ENCODE measurements at regions of chr1 and their contacts with region 1.

Region 1: GRCh38 chr1:109605381-109605780 is 14.0 kb downstream of the GNAT2 start:
- DNase-seq: no peak
- ATAC-seq: no peak
- H3K4me3 ChIP-seq: no peak overlapping the region
- H3K4me3 Mint-ChIP-seq: no peak overlapping the region
- H3K27ac ChIP-seq: no peak overlapping the region
- H3K27ac Mint-ChIP-seq: no peak overlapping the region
- H3K4me1 ChIP-seq: peaks cover 0 to 7% of the 10 kb centered on the region in 2 experiments
- H3K4me1 Mint-ChIP-seq: peaks cover 18 to 22% (median 21%) of the 10 kb centered on the region in 3 donors
- H3K27me3 ChIP-seq: no peaks in the 10 kb centered on the region
- H3K27me3 Mint-ChIP-seq: no peaks in the 10 kb centered on the region

Region 2: DNA sequence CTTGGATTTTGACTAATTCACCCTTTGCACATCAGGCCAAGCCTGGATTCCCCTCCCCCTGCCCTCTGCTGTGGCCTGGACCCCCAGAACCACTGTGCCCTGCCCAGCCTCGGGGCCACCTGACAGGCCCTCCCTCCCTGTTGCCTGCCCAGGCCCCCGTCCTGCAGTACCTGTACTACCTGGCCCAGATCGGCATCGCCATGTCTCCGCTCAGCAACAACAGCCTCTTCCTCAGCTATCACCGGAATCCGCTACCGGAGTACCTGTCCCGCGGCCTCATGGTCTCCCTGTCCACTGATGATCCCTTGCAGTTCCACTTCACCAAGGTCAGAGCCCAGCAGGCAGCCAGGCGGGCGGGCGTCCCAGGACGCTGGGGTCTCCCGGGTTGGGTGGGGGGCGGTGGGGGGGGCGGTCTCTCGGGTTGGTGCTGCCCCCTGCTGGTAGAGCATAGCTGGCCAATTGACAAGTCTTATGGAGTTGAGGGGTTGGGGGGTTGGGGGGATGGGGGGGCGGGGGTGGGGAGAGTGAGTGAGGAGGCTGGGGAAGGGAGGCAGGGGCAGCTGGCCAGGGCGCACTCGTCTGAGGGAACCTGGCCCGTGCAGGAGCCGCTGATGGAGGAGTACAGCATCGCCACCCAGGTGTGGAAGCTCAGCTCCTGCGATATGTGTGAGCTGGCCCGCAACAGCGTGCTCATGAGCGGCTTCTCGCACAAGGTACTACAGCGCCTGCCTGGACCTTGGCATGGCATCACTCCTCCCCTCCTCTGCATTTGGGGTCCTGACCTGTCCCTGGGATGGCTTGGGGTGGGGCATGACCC is 24.9 kb after region 1 on chr1:
- CTCF ChIA-PET with region 1: interaction called in 1 of 2 experiments, 10 read pairs
- POLR2A ChIA-PET with region 1: no interaction called
- DNase-seq: peak in 16 of 35 experiments; percentile 28 to 66 (median 36)
- ATAC-seq: peak in 3 of 4 experiments; percentile 9 to 51 (median 16)
- H3K4me3 ChIP-seq: no peak overlapping the region
- H3K4me3 Mint-ChIP-seq: no peak overlapping the region
- H3K27ac ChIP-seq: no peak overlapping the region
- H3K27ac Mint-ChIP-seq: no peak overlapping the region
- H3K4me1 ChIP-seq: peaks cover 4 to 13% of the 10 kb centered on the region in 2 experiments
- H3K4me1 Mint-ChIP-seq: peaks cover 11 to 21% (median 19%) of the 10 kb centered on the region in 3 donors
- H3K27me3 ChIP-seq: no peaks in the 10 kb centered on the region
- H3K27me3 Mint-ChIP-seq: no peaks in the 10 kb centered on the region

Region 3: DNA sequence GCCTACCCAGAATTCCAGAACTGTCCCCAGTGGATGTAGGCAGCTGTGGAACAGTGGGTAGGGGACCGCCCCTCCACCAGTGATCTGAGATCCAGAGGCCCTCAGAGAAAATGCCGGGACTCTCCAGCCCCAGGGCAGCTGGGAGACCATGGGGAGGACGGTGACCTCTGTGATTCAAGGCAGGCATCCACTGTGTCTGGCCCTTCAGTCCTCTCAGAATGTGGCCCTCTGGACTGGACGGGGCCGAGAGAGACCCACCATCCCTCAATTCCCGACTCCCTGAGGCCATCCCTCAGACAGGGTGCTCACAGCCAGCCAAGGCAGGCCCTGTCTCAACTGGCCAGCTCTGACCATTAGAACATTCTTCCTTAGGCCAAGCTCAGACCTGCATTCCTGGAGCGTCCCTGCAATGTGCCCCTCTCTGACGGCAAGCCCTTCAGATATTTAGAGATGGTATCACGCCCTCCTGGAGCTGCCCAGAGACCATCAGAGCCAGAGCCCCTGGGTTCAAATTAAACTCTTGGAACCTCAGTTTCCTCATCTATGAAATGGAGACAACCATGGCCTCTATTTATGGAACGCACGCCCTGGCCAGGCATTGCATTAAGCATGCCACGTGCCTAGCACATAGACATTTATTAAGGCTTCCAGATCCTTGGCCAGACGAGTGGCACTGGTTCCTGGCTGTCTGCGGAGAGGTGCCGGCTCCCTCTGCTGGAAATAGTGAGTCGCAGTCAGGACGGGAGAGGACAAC is 167.9 kb after region 1 on chr1:
- CTCF ChIA-PET with region 1: no interaction called
- POLR2A ChIA-PET with region 1: no interaction called
- DNase-seq: peak; percentile 37 to 82 (median 60)
- ATAC-seq: peak; percentile 83 to 94 (median 86)
- H3K4me3 ChIP-seq: no peak overlapping the region
- H3K4me3 Mint-ChIP-seq: no peak overlapping the region
- H3K27ac ChIP-seq: no peak overlapping the region
- H3K27ac Mint-ChIP-seq: no peak overlapping the region
- H3K4me1 ChIP-seq: peaks cover 0 to 18% of the 10 kb centered on the region in 2 experiments
- H3K4me1 Mint-ChIP-seq: peaks cover 7 to 16% (median 9%) of the 10 kb centered on the region in 3 donors
- H3K27me3 ChIP-seq: peaks cover 0 to 20% of the 10 kb centered on the region in 2 experiments
- H3K27me3 Mint-ChIP-seq: no peaks in the 10 kb centered on the region

Measured in T-cell (primary cell).